Panc1 (cell line): ENCODE measurements at regions of chr3 and their contacts with region 1.

Region 1: DNA sequence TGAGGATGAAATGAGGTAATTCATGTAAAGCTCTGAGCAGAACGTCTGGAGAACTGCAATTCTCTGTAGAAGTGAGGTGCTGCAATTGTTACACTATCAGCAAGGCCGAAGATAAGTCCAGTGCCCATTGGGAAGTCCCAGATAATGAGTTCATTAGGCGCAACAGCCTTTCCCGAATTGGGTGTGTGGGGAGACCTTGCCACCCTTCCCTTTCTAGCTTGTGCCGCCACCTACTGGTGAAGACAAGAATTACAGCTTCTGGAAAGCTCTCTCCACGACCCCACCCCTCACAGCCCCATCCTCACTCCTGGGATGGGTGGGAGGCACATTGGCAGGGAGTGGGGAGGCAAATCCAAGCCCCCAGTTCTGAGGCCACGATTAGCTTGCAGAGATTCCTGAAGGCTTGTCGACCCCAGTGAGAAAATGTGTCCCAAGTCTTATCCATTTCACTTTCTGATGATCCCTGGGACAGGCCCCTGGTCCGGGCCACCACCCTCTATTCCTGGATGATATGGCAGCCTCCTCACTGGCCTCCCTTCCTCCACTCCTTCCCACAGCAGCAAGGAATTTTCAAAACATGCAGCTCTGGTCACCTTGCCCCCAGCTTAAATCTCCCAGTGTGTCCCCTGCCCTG is 36.4 kb downstream of the FAM3D start:
- DNase-seq: peak; percentile 39
- ATAC-seq: peak; percentile 66
- H3K4me3 ChIP-seq: no peak overlapping the region
- H3K27ac ChIP-seq: no peak overlapping the region
- H3K4me1 ChIP-seq: peaks cover 12% of the 10 kb centered on the region
- H3K27me3 ChIP-seq: no peaks in the 10 kb centered on the region
- CTCF ChIP-seq: peak; percentile 91

Region 2: GRCh38 chr3:58568572-58569286 is 61.5 kb before region 1 on chr3:
- CTCF ChIA-PET with region 1: interaction called, 19 read pairs
- POLR2A ChIA-PET with region 1: interaction called, 4 read pairs
- in situ Hi-C with region 1: no loop called
- intact Hi-C with region 1: loop called (anchors 1 kb)
- DNase-seq: no peak
- ATAC-seq: peak; percentile 62
- H3K4me3 ChIP-seq: no peak overlapping the region
- H3K27ac ChIP-seq: no peak overlapping the region
- H3K4me1 ChIP-seq: peaks cover 3% of the 10 kb centered on the region; the same call in 1 of the 2 replicates
- H3K27me3 ChIP-seq: no peaks in the 10 kb centered on the region
- CTCF ChIP-seq: peak; percentile 89

Region 3: GRCh38 chr3:58585005-58585786 is 45.0 kb before region 1 on chr3:
- CTCF ChIA-PET with region 1: interaction called, 5 read pairs
- POLR2A ChIA-PET with region 1: no interaction called
- in situ Hi-C with region 1: no loop called
- intact Hi-C with region 1: loop called (anchors 5 kb)
- DNase-seq: no peak
- ATAC-seq: peak; percentile 98
- H3K4me3 ChIP-seq: peak overlapping the region; percentile 61 to 77
- H3K27ac ChIP-seq: peak overlapping the region; percentile 74
- H3K4me1 ChIP-seq: peaks cover 10% of the 10 kb centered on the region; the same call in 1 of the 2 replicates
- H3K27me3 ChIP-seq: no peaks in the 10 kb centered on the region
- CTCF ChIP-seq: peak; percentile 80